ENCODE measurements at regions of chr19 and their contacts with region 1.

Region 1: DNA sequence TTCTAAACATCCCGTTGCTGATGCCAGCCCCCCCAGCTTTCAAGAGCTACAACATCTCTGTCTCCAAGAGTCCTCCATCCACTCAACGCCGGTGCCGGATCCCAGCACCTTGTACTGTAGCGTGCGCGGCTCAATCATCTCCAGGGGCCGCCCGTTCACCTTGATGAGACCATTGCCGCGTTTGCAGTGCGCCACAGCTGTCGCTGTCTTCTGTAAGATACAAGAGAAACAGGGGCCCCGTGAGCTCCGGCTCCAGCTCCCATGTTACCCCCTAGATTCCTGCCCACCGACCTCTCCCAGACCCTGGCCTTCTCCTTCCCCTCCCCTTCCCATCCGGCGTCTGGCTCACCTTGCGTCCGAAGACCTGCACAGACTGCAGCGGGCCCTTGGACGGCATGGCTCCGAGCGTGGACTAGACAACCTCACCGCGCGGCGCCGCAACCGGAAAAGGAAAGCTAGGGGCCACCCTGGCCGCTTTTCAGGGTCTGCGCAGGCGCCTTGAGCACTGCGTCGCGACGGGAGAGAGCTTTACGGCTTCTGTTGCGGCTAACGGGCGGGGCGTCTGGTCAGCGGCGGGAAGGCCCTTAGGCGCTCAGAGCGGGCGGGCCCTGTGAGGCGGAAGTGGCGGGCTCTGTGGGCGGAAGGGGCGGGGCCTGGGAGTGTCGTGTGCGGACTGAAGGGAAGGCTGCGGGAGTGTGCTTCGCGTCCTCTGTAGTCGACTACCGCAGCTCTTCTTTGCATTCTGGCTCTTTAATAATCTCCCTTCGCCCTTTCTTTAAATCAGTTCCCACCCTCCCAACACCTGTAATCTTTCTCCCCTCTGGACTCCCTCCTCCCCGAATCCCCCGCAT is at the start of gene RPS16:
- DNase-seq: peak; percentile 99
- ATAC-seq: peak; percentile 83
- H3K4me3 Mint-ChIP-seq: peak within 1 kb of the TSS; percentile 99
- H3K27ac Mint-ChIP-seq: peak within 1 kb of the TSS; percentile 99
- H3K4me1 Mint-ChIP-seq: peaks cover 47% of the 10 kb centered on the region
- H3K27me3 Mint-ChIP-seq: no peaks in the 10 kb centered on the region
- CTCF ChIP-seq: no peak
- total RNA-seq, gene RPS16: 2,962 to 3,158 TPM (median 2,999 TPM) in 3 replicates

Region 2: DNA sequence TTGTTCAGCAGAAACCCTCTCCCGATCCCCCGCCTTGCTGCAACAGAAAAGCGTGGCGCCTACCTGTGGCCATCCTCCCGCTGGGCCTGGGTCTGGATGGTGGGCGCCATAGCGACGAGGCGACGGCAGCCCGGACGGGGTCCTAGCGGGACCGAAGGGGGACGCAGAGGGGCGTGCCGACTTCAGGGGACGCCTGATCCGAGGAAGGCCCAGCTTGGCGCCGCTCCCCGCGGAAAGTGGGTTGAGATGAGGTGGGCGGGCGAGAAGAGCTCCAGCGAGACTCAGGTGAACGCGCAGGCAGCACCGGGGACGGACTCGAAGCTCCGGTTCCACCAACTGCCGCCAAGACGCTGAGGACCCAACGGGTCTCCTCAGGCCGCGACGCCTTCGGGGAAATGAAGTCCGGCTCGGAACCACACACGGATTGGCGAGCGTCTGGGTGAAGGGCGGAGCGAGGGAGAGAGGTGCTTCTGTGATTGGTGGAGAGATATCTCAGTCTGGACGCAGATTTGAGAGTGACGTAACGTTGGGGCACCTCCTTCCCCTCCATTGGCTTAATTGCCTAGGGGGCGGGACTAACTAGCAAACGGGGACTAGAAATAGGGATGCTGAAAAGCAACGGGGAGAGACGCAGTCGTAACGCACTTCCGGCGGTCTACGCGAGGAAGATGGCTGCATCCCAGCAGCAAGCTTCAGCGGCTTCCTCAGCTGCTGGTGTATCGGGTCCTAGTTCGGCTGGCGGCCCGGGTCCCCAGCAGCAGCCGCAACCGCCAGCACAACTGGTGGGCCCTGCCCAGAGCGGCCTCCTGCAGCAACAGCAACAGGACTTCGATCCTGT is 44.8 kb before region 1 on chr19 and contains the starts of genes MED29 and PAF1:
- CTCF ChIA-PET with region 1: no interaction called
- POLR2A ChIA-PET with region 1: interaction called, 17 read pairs
- DNase-seq: peak; percentile 96
- ATAC-seq: peak; percentile 96
- H3K4me3 Mint-ChIP-seq: peak within 1 kb of the TSS; percentile 100
- H3K27ac Mint-ChIP-seq: peak within 1 kb of the TSS; percentile 99
- H3K4me1 Mint-ChIP-seq: peaks cover 14% of the 10 kb centered on the region
- H3K27me3 Mint-ChIP-seq: no peaks in the 10 kb centered on the region; the same call in 1 of the 2 replicates
- CTCF ChIP-seq: no peak
- total RNA-seq, gene MED29: 37.6 to 42.9 TPM (median 39.4 TPM) in 3 replicates
- total RNA-seq, gene PAF1: 27.8 to 34.4 TPM (median 29.4 TPM) in 3 replicates

Region 3: GRCh38 chr19:39406656-39407393 is 28.9 kb before region 1 on chr19 and contains the start of gene ZFP36:
- CTCF ChIA-PET with region 1: interaction called, 4 read pairs
- POLR2A ChIA-PET with region 1: interaction called, 15 read pairs
- DNase-seq: peak; percentile 80
- ATAC-seq: peak; percentile 13
- H3K4me3 Mint-ChIP-seq: peak within 1 kb of the TSS; percentile 90
- H3K27ac Mint-ChIP-seq: peak within 1 kb of the TSS; percentile 94
- H3K4me1 Mint-ChIP-seq: peaks cover 53% of the 10 kb centered on the region
- H3K27me3 Mint-ChIP-seq: no peaks in the 10 kb centered on the region
- CTCF ChIP-seq: no peak
- total RNA-seq, gene ZFP36: 17.3 to 22.2 TPM (median 18.4 TPM) in 3 replicates

Region 4: DNA sequence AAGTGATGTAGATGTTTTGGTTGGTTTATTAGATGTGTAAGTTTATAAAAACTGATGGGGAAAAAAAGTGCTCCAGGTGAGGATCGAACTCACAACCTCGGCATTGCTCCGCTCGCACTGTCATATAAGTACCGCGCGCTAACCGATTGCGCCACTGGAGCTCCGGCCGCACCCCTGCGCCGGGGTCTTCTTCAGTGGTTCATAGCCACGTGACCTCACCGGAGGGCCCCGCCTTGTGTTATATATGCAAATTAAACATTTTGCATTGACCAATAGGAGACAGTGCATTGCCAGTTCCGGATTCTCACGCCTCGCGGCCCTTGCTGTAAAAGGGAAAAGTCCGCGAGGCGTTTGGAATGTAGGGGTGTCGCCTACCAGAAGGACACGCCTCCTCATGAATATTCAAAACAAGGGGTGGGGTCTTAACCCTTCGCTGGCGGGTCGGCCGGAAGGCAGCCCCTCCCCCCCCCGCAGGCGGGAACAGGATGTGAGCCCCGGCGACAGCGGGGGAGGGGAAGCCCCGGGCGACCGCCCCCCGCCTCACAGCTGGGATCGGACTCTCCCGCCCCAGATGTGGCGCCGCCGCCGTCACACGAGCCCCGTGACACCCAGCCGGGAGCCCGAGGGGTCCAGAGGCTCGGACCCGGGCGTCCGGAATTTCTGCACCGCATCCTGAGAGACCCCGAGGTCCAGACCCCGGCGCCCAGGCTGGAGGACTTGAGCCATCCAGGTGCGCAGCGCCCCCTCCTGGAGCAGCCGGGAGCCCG is 23.4 kb before region 1 on chr19 and contains the start of gene PLEKHG2:
- CTCF ChIA-PET with region 1: interaction called, 12 read pairs
- POLR2A ChIA-PET with region 1: interaction called, 17 read pairs
- DNase-seq: peak; percentile 98
- ATAC-seq: peak; percentile 64
- H3K4me3 Mint-ChIP-seq: peak within 1 kb of the TSS; percentile 99
- H3K27ac Mint-ChIP-seq: peak within 1 kb of the TSS; percentile 84
- H3K4me1 Mint-ChIP-seq: peaks cover 47% of the 10 kb centered on the region
- H3K27me3 Mint-ChIP-seq: no peaks in the 10 kb centered on the region
- CTCF ChIP-seq: no peak; the same call in none of the 2 replicates
- total RNA-seq, gene PLEKHG2: 62.3 to 72.0 TPM (median 63.6 TPM) in 3 replicates

Region 5: DNA sequence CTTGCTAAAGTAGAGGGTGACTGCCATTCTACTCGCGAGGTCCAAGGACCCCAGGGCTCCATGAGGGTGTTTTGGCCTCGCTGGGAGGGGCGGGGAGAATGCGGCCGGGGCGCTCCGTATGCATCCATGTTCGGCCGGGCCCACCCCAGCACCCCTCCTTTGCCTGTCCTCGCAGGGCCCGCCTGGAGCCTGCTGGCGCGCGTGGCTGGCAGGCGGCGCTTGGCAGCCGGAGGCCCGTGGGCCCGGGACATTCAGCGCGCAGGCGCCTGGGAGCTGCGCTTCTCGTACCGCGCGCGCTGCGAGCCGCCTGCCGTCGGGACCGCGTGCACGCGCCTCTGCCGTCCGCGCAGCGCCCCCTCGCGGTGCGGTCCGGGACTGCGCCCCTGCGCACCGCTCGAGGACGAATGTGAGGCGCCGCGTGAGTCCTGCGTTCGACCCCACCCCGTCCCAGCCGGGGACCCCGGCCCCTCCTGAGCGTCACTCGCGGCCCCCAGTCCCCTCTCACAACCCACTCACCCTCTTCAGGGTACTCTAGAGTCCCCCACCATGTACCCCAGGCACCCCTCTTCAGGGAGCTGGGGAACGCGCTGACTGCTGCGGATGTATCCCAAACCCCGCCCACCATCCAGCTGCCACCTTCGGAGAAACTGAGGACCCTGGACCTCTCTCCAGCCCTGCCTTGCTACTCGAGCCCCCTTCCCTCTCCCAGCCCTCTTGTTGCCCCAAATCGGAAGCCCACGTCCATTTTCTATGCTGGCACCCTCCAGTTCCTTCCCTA is 67.1 kb after region 1 on chr19:
- CTCF ChIA-PET with region 1: interaction called, 6 read pairs
- POLR2A ChIA-PET with region 1: interaction called, 11 read pairs
- DNase-seq: peak; percentile 80
- ATAC-seq: peak; percentile 8
- H3K4me3 Mint-ChIP-seq: no peak overlapping the region
- H3K27ac Mint-ChIP-seq: no peak overlapping the region
- H3K4me1 Mint-ChIP-seq: peaks cover 17% of the 10 kb centered on the region
- H3K27me3 Mint-ChIP-seq: peaks cover 95% of the 10 kb centered on the region
- CTCF ChIP-seq: peak; percentile 100

Region 6: DNA sequence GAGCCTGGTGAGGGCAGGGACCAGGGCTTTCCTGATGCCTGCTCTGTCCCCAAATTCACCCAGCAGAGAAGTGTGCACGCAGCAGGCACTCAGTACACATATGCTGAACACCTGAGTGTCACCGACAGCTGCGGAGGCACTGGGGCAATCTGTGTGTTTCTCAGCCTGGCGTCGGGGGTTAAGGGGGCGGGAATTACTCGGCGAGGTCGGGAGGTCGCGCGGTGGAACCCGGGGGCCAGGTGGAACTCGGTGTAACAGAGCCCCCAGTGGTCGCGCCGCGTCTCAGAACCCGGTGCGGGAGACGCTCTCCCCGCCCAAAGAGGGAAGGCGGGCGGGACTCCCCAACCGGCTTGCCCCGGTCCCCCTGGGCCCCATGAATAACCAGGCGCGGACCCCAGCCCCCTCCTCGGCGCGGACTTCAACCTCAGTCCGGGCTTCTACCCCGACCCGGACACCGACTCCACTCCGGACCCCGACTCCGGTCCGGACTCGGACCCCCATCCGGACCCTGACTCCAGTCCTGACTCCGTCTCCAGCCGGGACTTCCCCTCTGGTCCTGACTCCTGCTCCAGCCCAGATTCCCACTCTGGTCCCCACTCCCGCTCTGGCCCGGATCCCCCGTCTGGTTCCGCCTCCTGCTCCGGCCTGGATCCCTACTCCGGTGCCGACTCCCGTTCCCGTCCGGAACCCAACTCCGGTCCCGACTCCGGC is 79.3 kb after region 1 on chr19 and contains the start of gene SELENOV:
- CTCF ChIA-PET with region 1: interaction called, 3 read pairs
- POLR2A ChIA-PET with region 1: interaction called, 10 read pairs
- DNase-seq: peak; percentile 90
- ATAC-seq: peak; percentile 76
- H3K4me3 Mint-ChIP-seq: peak within 1 kb of the TSS; percentile 89
- H3K27ac Mint-ChIP-seq: peak within 1 kb of the TSS; percentile 41; the same call in 1 of the 2 replicates
- H3K4me1 Mint-ChIP-seq: peaks cover 27% of the 10 kb centered on the region
- H3K27me3 Mint-ChIP-seq: peaks cover 36% of the 10 kb centered on the region
- CTCF ChIP-seq: no peak
- total RNA-seq, gene SELENOV: 12.6 to 15.4 TPM (median 15.1 TPM) in 3 replicates

Measured in WTC11 (cell line).